Aorta (tissue), 5 donors: ENCODE measurements at regions of chrX and their contacts with region 1.

Region 1: GRCh38 chrX:130196466-130196865 is 24.7 kb downstream of the RAB33A start:
- DNase-seq: no peak
- ATAC-seq: no peak
- H3K4me3 ChIP-seq: no peak overlapping the region
- H3K27ac ChIP-seq: no peak overlapping the region
- H3K4me1 ChIP-seq: no peaks in the 10 kb centered on the region
- H3K27me3 ChIP-seq: no peaks in the 10 kb centered on the region

Region 2: GRCh38 chrX:129606918-129607317 is 589.5 kb before region 1 on chrX:
- intact Hi-C with region 1: loop called in 1 of 2 experiments (anchors 10 kb)
- DNase-seq: no peak
- ATAC-seq: peak; percentile 71
- H3K4me3 ChIP-seq: no peak overlapping the region
- H3K27ac ChIP-seq: no peak overlapping the region
- H3K4me1 ChIP-seq: no peaks in the 10 kb centered on the region
- H3K27me3 ChIP-seq: no peaks in the 10 kb centered on the region

Region 3: GRCh38 chrX:129748305-129748704 is 448.2 kb before region 1 on chrX:
- intact Hi-C with region 1: no loop called
- DNase-seq: no peak
- ATAC-seq: peak; percentile 80
- H3K4me3 ChIP-seq: no peak overlapping the region
- H3K27ac ChIP-seq: no peak overlapping the region
- H3K4me1 ChIP-seq: peaks cover 0 to 1% of the 10 kb centered on the region in 2 donors
- H3K27me3 ChIP-seq: no peaks in the 10 kb centered on the region

Region 4: DNA sequence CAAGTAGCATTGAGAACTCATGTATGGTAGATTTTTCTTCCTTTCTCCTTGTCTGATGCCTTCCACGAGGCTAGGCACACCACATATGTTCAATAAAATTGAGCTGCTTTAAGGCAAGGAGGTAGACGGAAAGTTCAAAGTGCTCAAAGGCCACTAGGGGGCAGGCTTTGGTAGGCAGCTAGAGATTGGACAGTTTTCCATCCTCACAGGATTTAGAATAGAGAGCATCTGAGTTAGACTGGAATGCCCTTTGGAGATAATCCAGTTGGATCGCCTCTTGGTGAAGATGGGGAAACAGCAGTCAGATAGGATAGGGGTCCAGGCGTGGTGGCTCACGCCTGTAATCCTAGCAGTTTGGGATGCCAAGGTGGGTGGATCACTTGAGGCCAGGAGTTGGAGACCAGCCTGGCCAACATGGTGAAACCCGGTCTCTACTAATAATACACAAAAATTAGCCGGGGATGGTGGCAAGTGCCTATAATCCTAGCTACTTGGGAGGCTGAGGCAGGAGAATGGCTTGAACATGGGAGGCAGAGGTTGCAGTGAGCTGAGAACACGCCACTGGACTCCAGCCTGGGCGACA is 116.6 kb before region 1 on chrX:
- intact Hi-C with region 1: loop called in 1 of 2 experiments (anchors 2 kb)
- DNase-seq: no peak
- ATAC-seq: peak; percentile 70
- H3K4me3 ChIP-seq: no peak overlapping the region
- H3K27ac ChIP-seq: no peak overlapping the region
- H3K4me1 ChIP-seq: no peaks in the 10 kb centered on the region
- H3K27me3 ChIP-seq: no peaks in the 10 kb centered on the region